Adrenal gland (tissue), 19 donors: ENCODE measurements at regions of chr7 and their contacts with region 1.

Region 1: GRCh38 chr7:48089046-48090003 is at the start of gene UPP1:
- DNase-seq: peak in 6 of 7 donors; percentile 52 to 96 (median 96)
- H3K4me3 ChIP-seq: peak within 1 kb of the TSS; percentile 49 to 90 (median 74)
- H3K27ac ChIP-seq: peak within 1 kb of the TSS; percentile 97 to 99 (median 98)
- H3K4me1 ChIP-seq: peaks cover 7 to 53% of the 10 kb centered on the region in 2 donors
- H3K27me3 ChIP-seq: no peaks in the 10 kb centered on the region
- CTCF ChIP-seq: peak in 2 of 6 experiments; percentile 2 to 8
- POLR2A ChIP-seq: peak; percentile 93 to 94
- total RNA-seq, gene UPP1: 6.9 to 47.1 (median 23.7) TPM

Region 2: GRCh38 chr7:48035301-48035966 is 53.9 kb before region 1 on chr7 and contains the start of gene C7orf57:
- intact Hi-C with region 1: loop called in 1 of 2 experiments (anchors 10 kb)
- DNase-seq: peak; percentile 90 to 96 (median 93)
- H3K4me3 ChIP-seq: peak within 1 kb of the TSS in 2 of 4 donors; percentile 25 to 55
- H3K27ac ChIP-seq: no peak within 1 kb of the TSS
- H3K4me1 ChIP-seq: peaks cover 9 to 10% of the 10 kb centered on the region in 2 donors
- H3K27me3 ChIP-seq: no peaks in the 10 kb centered on the region
- CTCF ChIP-seq: peak in 1 of 6 experiments; percentile 19
- POLR2A ChIP-seq: no peak
- total RNA-seq, gene C7orf57: 1.7 TPM in 1 of 9 donors, not detected in the others

Region 3: DNA sequence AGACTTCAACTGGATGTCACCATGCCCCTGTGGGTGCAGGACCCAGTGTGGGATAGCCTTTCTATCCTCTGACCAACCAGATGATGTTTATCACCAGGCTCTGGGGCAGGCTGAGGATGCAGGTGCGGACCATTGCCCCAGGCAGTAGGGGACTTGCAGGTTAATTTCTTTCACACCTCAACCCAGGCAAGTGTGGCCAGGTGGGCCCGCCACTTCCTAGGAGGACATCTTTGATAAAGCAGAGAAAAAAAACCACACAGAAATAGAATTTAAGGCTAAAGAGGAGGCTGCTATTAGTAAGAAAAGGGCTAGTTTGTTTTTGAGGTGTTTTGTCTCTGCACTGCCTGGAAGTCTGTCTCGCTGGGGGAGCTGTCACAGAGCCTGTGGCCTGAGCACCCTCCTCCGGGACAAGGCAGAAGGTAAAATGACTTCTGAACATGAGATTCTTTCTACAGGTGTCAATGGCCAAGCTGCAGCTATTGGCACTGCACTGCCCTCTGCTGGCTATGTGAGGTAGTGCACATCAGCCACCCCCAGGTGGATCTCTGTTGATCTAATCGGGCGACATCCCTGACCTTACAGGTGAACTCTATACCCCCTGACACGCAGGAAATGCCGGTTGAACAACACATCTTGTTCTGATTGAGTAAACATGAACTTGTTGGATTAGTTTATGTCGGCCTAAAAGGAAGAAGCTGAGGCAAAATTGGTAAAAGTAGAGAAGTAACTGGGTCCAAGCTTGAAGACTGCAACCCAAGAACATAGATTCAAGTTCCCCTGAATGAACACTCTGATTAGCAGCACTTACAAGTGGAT is 20.7 kb after region 1 on chr7:
- intact Hi-C with region 1: no loop called
- DNase-seq: peak; percentile 61 to 93 (median 80)
- H3K4me3 ChIP-seq: no peak overlapping the region
- H3K27ac ChIP-seq: no peak overlapping the region
- H3K4me1 ChIP-seq: peaks cover 6 to 7% of the 10 kb centered on the region in 2 donors
- H3K27me3 ChIP-seq: no peaks in the 10 kb centered on the region
- CTCF ChIP-seq: peak; percentile 94 to 99 (median 98)
- POLR2A ChIP-seq: no peak